ENCODE measurements at regions of chr15 and their contacts with region 1.

Region 1: GRCh38 chr15:48877630-48878595 is at the start of gene EID1:
- DNase-seq: peak; percentile 96
- H3K4me3 Mint-ChIP-seq: peak within 1 kb of the TSS; percentile 99
- H3K27ac Mint-ChIP-seq: peak within 1 kb of the TSS; percentile 97
- H3K4me1 Mint-ChIP-seq: peaks cover 49% of the 10 kb centered on the region
- H3K27me3 Mint-ChIP-seq: no peaks in the 10 kb centered on the region
- total RNA-seq, gene EID1: 99.7 to 102 TPM

Region 2: DNA sequence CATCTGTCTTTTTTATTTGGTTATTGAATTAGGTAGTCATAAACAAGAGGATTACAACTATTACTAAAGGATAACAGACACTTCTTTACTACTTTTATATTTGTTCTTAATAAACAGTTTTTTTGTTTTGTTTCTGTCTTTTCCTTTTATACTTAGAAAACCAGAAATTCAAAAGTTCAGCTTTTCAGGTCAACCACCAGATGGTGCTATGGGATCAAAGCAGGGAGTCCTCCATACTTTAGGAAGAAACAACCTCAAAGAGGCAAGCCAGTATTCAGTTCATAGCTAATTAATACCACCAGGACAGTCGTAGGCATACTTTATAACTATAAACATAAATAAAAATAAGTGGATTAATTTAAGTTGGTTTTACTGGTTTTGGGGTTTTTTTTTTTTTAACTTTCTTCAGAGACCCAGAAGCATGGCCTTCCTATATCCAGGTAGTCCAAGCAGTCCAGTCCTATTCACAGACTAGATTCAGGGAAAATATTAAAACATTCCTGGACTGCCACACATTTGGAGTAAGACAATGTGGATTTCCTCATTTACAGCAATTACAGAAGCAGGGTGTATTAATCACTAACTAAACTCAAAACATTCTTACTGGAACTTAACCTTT is 16.0 kb before region 1 on chr15:
- CTCF ChIA-PET with region 1: interaction called, 20 read pairs
- POLR2A ChIA-PET with region 1: interaction called, 11 read pairs
- DNase-seq: peak; percentile 33
- H3K4me3 Mint-ChIP-seq: no peak overlapping the region
- H3K27ac Mint-ChIP-seq: no peak overlapping the region
- H3K4me1 Mint-ChIP-seq: peaks cover 23% of the 10 kb centered on the region
- H3K27me3 Mint-ChIP-seq: peaks cover 7% of the 10 kb centered on the region

Region 3: GRCh38 chr15:48963524-48964113 is 85.7 kb after region 1 on chr15 and contains the start of gene SHC4:
- CTCF ChIA-PET with region 1: interaction called, 11 read pairs
- POLR2A ChIA-PET with region 1: interaction called, 55 read pairs
- DNase-seq: peak; percentile 23
- H3K4me3 Mint-ChIP-seq: peak within 1 kb of the TSS; percentile 67
- H3K27ac Mint-ChIP-seq: peak within 1 kb of the TSS; percentile 58
- H3K4me1 Mint-ChIP-seq: peaks cover 51% of the 10 kb centered on the region
- H3K27me3 Mint-ChIP-seq: peaks cover 35% of the 10 kb centered on the region
- total RNA-seq, gene SHC4: 1.9 to 2.8 TPM

Region 4: GRCh38 chr15:49155110-49155833 is 277.4 kb after region 1 on chr15 and contains the start of gene COPS2:
- CTCF ChIA-PET with region 1: interaction called, 4 read pairs
- POLR2A ChIA-PET with region 1: interaction called, 29 read pairs
- DNase-seq: peak; percentile 96
- H3K4me3 Mint-ChIP-seq: peak within 1 kb of the TSS; percentile 98
- H3K27ac Mint-ChIP-seq: peak within 1 kb of the TSS; percentile 93
- H3K4me1 Mint-ChIP-seq: peaks cover 54% of the 10 kb centered on the region
- H3K27me3 Mint-ChIP-seq: no peaks in the 10 kb centered on the region
- total RNA-seq, gene COPS2: 62.6 to 68.7 TPM